Activated T-helper 1 cell treated with anti-CD3 and anti-CD28 coated beads, Interleukin-12 subunit alpha, Interleukin-12 subunit beta, Interleukin-2, Interleukin-4 antibody, amounts not matched to agents 30 ng/mL and 10 ng/mL and 1 ng/mL, durations not matched to agents 14 hours and 24 hours and 36 hours (primary cell): ENCODE measurements at regions of chr17 and their contacts with region 1.

Region 1: GRCh38 chr17:78925234-78925633 is at the start of gene TIMP2:
- DNase-seq: peak; percentile 60
- H3K4me3 Mint-ChIP-seq: peak within 1 kb of the TSS; percentile 47
- H3K27ac Mint-ChIP-seq: no peak within 1 kb of the TSS
- H3K4me1 Mint-ChIP-seq: peaks cover 5% of the 10 kb centered on the region
- H3K27me3 Mint-ChIP-seq: peaks cover 35% of the 10 kb centered on the region
- total RNA-seq, gene TIMP2: 1.0 and 1.1 TPM in 2 replicates

Region 2: DNA sequence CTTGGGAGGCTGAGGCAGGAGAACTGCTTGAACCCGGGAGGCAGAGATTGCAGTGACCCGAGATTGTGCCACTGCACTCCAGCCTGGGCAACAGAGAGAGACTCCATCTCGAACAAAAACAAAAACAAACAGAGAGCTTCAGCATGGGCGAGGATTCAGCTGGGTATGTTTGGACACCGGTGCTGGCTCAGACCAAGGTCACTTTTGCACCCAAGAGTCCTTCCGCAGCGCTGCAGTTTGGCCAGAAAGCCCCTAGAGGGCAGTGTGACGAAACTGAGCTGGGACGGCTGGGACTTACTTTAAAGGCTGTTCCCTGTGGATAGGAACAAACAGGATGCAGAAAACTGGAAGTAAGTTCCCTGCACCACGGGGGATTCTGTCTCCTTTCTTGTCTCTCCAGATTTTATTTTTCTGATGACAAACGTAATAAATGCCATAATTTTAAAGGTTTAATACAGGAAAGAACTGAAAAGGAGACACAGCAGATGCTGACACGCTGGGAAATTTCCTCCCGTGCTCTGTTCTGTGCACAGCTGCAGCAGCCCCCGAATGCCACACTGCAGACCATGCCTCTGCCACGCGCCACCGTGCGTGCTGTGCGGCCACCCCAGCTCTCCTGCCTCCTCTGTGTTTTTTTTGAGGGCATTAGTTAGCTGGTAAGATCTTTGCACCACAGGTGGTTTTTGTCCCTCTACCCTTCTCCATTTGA is 59.4 kb before region 1 on chr17:
- intact Hi-C with region 1: loop called (anchors 1 kb)
- DNase-seq: peak; percentile 51
- H3K4me3 Mint-ChIP-seq: no peak overlapping the region
- H3K27ac Mint-ChIP-seq: no peak overlapping the region
- H3K4me1 Mint-ChIP-seq: no peaks in the 10 kb centered on the region
- H3K27me3 Mint-ChIP-seq: peaks cover 8% of the 10 kb centered on the region

Region 3: DNA sequence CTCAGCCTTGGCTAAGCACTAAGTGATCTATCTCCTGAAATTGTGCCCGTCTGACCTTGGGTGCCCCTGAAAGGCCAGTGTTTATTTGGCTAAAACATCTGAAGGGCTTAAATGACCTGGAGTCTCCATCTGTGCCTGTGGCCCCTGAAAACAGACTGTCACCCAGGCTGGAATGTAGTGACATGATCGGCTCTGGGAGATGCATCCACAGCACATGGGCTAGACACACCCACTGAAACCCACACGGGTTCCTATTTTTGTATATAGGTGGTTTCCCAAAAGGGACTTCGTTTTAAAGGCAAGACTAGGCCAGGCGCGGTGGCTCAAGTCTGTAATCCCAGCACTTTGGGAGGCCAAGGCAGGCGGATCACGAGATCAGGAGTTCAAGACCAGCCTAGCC is 35.7 kb before region 1 on chr17:
- intact Hi-C with region 1: loop called (anchors 5 kb)
- DNase-seq: peak; percentile 25
- H3K4me3 Mint-ChIP-seq: peak overlapping the region; percentile 54
- H3K27ac Mint-ChIP-seq: no peak overlapping the region
- H3K4me1 Mint-ChIP-seq: peaks cover 29% of the 10 kb centered on the region
- H3K27me3 Mint-ChIP-seq: peaks cover 16% of the 10 kb centered on the region

Region 4: DNA sequence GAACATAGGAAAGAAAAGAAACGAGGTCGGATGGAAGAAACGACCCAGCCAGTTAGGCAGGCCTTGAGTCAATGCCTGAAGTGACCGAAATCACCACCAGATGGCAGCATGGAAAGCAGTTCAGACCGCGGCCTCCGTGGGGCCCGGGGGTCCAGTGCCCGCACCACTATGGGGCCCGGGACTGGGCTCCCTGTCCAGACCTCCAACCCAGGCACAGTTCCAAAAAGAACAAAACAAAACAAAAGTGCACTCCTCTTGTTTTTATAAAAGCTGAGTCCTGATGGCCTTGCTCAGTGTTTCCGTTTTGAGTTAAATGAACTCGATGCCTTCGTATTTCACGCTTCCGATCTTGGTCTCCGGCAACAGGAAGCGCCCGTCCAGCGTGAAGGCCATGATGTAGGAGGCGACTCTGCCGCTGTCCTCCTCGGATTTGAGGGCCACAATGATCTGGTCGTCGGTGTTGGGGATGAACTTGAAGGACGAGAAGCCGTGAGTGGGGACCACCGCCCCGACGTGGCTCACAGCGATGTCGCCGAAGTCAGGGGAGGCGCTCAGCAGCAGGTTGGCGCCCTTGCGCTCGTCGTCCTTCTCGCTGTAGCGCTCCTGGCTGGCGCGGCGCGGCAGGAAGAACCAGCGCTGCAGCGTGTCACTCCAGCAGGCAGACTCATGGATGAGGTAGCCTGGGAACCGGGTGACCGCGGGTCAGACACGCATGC is 68.2 kb after region 1 on chr17:
- intact Hi-C with region 1: no loop called
- DNase-seq: no peak
- H3K4me3 Mint-ChIP-seq: no peak overlapping the region
- H3K27ac Mint-ChIP-seq: no peak overlapping the region
- H3K4me1 Mint-ChIP-seq: peaks cover 9% of the 10 kb centered on the region
- H3K27me3 Mint-ChIP-seq: no peaks in the 10 kb centered on the region